PC-3 (cell line): ENCODE measurements at regions of chr5 and their contacts with region 1.

Region 1: GRCh38 chr5:128304088-128304487 is 220.5 kb downstream of the SLC12A2 start:
- DNase-seq: peak; percentile 22
- ATAC-seq: no peak
- H3K4me3 ChIP-seq: no peak overlapping the region
- H3K27ac ChIP-seq: no peak overlapping the region
- H3K4me1 ChIP-seq: no peaks in the 10 kb centered on the region
- H3K27me3 ChIP-seq: no peaks in the 10 kb centered on the region
- CTCF ChIP-seq: no peak

Region 2: DNA sequence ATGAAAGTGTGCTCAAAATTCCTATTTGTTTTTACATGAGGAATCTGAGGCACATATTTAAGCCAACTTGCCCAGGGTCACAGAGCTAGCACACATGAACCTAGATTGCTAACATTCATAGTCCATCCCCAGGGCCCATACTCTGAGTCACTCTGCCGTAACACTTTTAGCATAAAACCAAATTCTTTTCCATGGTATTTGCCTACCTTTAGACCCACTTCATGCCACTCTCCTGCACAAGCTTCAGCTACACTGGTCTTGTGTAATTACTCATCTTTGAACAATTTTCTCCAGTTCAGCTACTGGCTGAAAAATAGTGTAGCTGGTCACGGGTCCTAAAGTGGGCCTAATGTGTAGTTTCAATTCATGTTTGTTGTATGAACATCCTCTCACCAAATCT is 19.9 kb before region 1 on chr5:
- CTCF ChIA-PET with region 1: no interaction called
- POLR2A ChIA-PET with region 1: no interaction called
- intact Hi-C with region 1: loop called (anchors 2 kb)
- DNase-seq: peak; percentile 56
- ATAC-seq: peak; percentile 61
- H3K4me3 ChIP-seq: no peak overlapping the region
- H3K27ac ChIP-seq: no peak overlapping the region
- H3K4me1 ChIP-seq: peaks cover 8% of the 10 kb centered on the region; the same call in 1 of the 2 replicates
- H3K27me3 ChIP-seq: no peaks in the 10 kb centered on the region
- CTCF ChIP-seq: no peak